ENCODE measurements at regions of chr11 and their contacts with region 1.

Region 1: GRCh38 chr11:118907051-118908042 is 18.4 kb downstream of the BCL9L start:
- DNase-seq: peak; percentile 74 to 88 (median 82)
- H3K4me3 ChIP-seq: no peak overlapping the region
- H3K4me3 Mint-ChIP-seq: peak overlapping the region in 5 of 7 donors; percentile 21 to 65 (median 34)
- H3K27ac ChIP-seq: no peak overlapping the region
- H3K27ac Mint-ChIP-seq: peak overlapping the region; percentile 81 to 100 (median 96)
- H3K4me1 ChIP-seq: peaks cover 57% of the 10 kb centered on the region
- H3K4me1 Mint-ChIP-seq: peaks cover 42 to 57% (median 47%) of the 10 kb centered on the region in 3 donors
- H3K27me3 ChIP-seq: no peaks in the 10 kb centered on the region
- H3K27me3 Mint-ChIP-seq: no peaks in the 10 kb centered on the region

Region 2: DNA sequence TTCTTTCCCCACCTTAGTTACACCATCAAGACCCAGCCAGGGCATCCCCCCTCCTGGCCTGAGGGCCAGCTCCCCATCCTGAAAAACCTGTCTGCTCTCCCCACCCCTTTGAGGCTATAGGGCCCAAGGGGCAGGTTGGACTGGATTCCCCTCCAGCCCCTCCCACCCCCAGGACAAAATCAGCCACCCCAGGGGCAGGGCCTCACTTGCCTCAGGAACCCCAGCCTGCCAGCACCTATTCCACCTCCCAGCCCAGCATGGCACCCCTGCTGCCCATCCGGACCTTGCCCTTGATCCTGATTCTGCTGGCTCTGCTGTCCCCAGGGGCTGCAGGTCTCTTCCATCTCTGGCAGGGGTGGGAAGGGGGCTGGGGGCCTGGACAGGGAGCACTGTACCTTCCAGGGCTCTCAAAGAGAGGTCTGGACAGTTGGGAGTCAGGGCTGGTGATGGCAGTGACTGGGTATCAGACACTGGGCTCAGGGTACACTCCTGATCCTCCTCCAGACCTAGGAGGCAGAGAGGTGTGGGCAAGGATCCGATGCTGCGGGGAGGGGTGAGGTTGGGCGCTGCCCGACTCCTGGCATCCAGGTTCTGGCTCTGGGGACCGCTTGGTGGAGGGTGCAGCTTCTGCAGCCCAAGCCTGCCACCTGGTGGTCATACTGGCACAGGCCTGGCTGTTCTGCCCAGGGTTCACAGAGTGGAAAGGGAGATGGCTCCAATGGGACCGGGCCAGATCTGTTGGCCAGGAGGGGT is 48.9 kb after region 1 on chr11 and contains the start of gene UPK2:
- CTCF ChIA-PET with region 1: interaction called, 18 read pairs
- POLR2A ChIA-PET with region 1: interaction called, 3 read pairs
- DNase-seq: peak; percentile 76 to 91 (median 86)
- H3K4me3 ChIP-seq: no peak within 1 kb of the TSS
- H3K4me3 Mint-ChIP-seq: peak within 1 kb of the TSS in 1 of 7 donors; percentile 41
- H3K27ac ChIP-seq: no peak within 1 kb of the TSS
- H3K27ac Mint-ChIP-seq: peak within 1 kb of the TSS in 4 of 8 donors; percentile 12 to 80 (median 66)
- H3K4me1 ChIP-seq: peaks cover 7% of the 10 kb centered on the region
- H3K4me1 Mint-ChIP-seq: peaks cover 3 to 9% (median 5%) of the 10 kb centered on the region in 3 donors
- H3K27me3 ChIP-seq: no peaks in the 10 kb centered on the region
- H3K27me3 Mint-ChIP-seq: peaks cover 7 to 13% of the 10 kb centered on the region in 2 donors
- total RNA-seq, gene UPK2: 0.22 TPM in 1 of 2 experiments, not detected in the other